HEK293T (cell line): ENCODE measurements at regions of chr1 and their contacts with region 1.

Region 1: DNA sequence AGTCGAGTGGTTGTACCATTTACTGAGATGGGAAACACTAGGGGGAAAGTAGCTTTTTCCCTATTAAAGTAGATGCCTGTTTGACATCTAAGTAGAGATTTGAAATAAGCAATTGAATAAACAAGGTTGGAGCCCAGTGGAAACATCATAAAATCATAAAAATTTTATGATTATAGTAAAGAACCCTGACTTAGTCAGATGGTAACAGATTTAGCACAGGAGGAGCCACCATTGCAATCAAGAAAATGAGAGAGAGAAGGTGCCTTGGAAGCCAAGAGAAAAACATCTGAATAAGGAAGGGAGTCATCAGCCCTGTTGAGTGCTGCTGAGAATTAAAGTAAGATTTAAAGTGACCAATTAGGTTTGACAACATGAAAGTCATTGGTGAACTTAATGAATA is 49.8 kb downstream of the SMG7 start:
- DNase-seq: no peak

Region 2: DNA sequence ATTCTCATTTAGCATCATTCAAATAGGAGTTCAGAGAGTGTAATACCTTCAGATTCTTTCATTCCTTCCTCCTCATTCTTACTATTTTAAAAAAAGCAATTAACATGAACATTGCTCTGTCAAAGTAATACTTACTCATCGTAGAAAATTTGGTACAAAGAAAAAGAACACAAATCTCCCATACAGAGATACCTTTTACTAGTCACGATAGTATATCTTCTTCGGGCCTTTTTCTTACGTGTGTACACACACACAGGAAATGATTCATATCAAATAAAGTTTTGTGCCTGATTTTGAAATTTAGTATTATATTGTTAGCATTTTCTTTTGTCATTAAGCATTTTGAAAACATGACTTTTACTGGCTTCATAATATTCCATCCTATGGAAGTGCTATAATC is 15.3 kb after region 1 on chr1:
- CTCF ChIA-PET with region 1: interaction called, 10 read pairs
- POLR2A ChIA-PET with region 1: no interaction called
- DNase-seq: no peak